Right cardiac atrium (tissue), 5 donors: ENCODE measurements at regions of chr1 and their contacts with region 1.

Region 1: GRCh38 chr1:224922404-224923164 is 6.9 kb upstream of the DNAH14 start:
- DNase-seq: no peak
- ATAC-seq: peak; percentile 49 to 55
- H3K4me3 ChIP-seq: no peak overlapping the region
- H3K27ac ChIP-seq: no peak overlapping the region
- H3K4me1 ChIP-seq: no peaks in the 10 kb centered on the region
- H3K27me3 ChIP-seq: no peaks in the 10 kb centered on the region

Region 2: DNA sequence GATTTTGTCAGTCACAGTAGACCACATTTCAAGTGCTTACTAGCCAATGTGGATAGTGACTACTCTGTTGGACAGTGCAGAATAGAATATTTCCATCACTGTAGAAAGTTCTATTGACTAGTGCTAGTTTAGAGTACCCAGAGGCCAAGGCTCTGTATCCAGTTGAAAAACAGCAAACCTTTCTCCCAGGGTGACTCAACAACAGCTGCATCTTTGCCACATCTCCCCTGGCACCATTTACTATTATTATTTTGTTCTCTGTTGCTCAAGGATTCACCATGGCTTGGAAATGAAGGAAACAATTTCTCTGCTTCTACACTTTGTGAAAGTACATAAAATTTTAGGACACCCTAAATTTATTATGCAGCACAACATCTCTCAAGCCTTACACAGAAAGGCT is 402.7 kb before region 1 on chr1:
- intact Hi-C with region 1: loop called in 1 of 4 experiments (anchors 5 kb)
- DNase-seq: no peak
- ATAC-seq: no peak
- H3K4me3 ChIP-seq: no peak overlapping the region
- H3K27ac ChIP-seq: no peak overlapping the region
- H3K4me1 ChIP-seq: no peaks in the 10 kb centered on the region
- H3K27me3 ChIP-seq: no peaks in the 10 kb centered on the region

Region 3: GRCh38 chr1:224851210-224851847 is 71.3 kb before region 1 on chr1:
- intact Hi-C with region 1: no loop called
- DNase-seq: peak; percentile 44 to 79 (median 72)
- ATAC-seq: peak; percentile 41 to 54
- H3K4me3 ChIP-seq: no peak overlapping the region
- H3K27ac ChIP-seq: no peak overlapping the region
- H3K4me1 ChIP-seq: no peaks in the 10 kb centered on the region
- H3K27me3 ChIP-seq: no peaks in the 10 kb centered on the region